ENCODE measurements at regions of chr1 and their contacts with region 1.

Region 1: DNA sequence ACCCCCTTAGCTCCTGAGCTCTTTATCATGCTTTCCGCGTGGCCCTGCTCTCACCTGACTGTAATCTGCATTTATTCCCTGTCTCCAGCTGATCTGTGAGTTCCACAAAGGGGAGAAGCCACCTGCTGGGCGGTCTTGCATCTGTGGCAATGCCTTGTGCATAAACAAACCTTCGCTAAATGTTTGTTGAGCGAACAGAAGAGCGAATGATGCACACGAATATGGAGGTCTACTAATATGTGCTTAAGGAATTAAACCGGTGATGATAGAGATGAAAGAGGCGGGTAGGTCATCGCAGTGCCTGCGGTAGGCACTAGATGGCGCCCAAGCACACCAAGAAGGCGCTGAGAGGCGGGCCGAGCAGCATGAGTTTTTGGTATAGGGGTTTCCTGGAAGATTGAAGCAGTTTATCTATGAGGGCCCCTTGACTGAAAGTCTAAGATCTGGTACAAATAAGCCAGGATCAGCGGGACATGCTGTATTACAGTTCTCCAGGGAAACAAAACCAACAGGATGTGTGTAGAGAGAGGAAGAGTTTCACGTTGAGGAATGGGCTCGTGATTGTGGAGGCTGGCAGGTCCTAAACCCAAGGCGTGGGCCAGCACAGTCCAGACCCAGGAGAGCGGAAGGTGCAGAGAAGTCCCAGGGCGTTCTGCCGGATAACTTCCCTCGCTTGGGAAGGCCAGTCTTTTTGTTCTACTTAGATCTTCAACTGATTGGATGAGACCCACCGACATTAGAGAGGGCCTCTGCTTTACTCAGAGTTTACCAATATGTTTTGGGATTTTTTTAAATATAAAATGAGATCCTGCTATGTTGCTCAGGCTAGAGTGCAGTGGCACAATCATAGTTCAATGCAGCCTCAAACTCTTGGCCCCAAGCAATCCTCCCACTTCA is 34.7 kb downstream of the TOMM20 start:
- DNase-seq: no peak
- H3K4me3 ChIP-seq: no peak overlapping the region
- H3K27ac ChIP-seq: no peak overlapping the region
- H3K4me1 ChIP-seq: no peaks in the 10 kb centered on the region
- H3K27me3 ChIP-seq: no peaks in the 10 kb centered on the region
- CTCF ChIP-seq: peak; percentile 90 to 92

Region 2: GRCh38 chr1:234486498-234487448 is 607.2 kb before region 1 on chr1:
- CTCF ChIA-PET with region 1: interaction called, 7 read pairs
- dilution Hi-C with region 1: no loop called
- in situ Hi-C with region 1: no loop called
- intact Hi-C with region 1: loop called (anchors 1 kb)
- DNase-seq: peak; percentile 60
- H3K4me3 ChIP-seq: no peak overlapping the region
- H3K27ac ChIP-seq: no peak overlapping the region
- H3K4me1 ChIP-seq: peaks cover 8% of the 10 kb centered on the region
- H3K27me3 ChIP-seq: no peaks in the 10 kb centered on the region
- CTCF ChIP-seq: peak; percentile 79 to 83

Region 3: DNA sequence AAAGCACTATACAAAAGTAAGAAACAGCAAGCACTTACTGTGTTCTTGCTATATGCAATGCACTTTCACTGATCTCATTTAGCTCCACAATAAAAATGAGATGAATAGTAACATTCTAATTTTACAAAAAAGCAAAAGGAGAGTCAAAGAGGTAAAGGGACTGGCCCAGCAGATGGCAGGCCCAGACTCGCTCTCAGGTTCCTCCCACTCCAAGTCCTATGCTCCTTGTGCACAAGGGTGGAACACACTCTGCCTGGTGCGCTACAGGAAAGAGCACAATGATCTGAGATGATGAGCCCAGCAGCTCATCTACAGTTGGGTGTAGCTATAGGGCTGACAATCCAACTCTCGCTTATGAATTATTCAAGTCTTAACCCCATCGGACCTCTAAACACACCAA is 866.9 kb after region 1 on chr1:
- CTCF ChIA-PET with region 1: no interaction called
- dilution Hi-C with region 1: no loop called
- in situ Hi-C with region 1: no loop called
- intact Hi-C with region 1: loop called (anchors 10 kb)
- DNase-seq: peak; percentile 71
- H3K4me3 ChIP-seq: no peak overlapping the region
- H3K27ac ChIP-seq: no peak overlapping the region
- H3K4me1 ChIP-seq: peaks cover 9% of the 10 kb centered on the region
- H3K27me3 ChIP-seq: no peaks in the 10 kb centered on the region
- CTCF ChIP-seq: peak in 1 of 2 donors; percentile 5